Activated naive CD4-positive, alpha-beta T cell treated with anti-CD3 and anti-CD28 coated beads, Interleukin-2, amount 10 ng/mL, durations not matched to agents 7 days and 5 days (primary cell): ENCODE measurements at regions of chr5 and their contacts with region 1.

Region 1: DNA sequence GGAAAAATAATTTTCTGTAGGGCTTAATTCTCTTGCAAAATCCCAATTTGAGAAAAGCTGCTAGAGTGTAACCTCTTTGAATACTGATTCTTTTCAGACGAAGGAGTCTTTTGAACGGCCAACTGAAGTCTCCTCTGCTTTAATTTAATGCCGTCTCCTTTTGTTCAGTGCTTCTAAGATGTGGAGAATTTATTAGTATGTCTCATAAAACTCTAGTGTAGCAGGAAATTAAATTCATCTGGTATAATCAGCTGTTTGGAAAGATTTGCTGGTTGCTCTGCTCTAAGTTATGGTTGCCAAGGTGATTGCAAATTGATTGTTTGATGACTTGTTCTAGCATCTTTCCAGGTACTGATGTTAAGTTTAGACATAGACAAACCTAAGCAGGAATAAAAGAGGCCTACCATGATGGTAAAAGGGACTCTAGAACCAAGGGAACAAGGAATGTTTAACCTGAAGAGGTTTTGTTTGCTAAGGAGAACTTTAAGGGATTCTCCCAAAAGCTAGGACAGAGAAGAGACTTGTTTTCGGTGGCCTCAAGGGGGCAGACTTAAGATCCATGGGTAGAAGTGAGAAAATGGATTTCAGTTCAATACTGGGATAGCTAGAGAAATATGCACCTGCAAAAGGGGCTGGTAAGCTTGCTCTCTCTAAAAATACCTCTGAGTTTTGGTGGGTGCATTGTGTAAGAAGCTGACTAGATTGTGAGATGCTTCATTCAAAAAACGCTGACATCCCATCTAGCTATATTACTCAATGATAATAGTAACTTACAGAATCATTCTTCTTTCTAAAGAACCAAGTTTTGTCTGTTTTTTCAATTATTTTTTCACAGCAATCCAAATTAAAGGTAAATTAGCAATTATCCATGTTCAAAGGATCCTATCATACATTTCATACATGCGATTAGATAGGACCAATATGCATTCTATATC is 5.7 kb upstream of the ADRB2 start:
- DNase-seq: peak; percentile 42
- H3K4me3 Mint-ChIP-seq: no peak overlapping the region
- H3K27ac Mint-ChIP-seq: no peak overlapping the region
- H3K4me1 Mint-ChIP-seq: peaks cover 10% of the 10 kb centered on the region
- H3K27me3 Mint-ChIP-seq: peaks cover 39% of the 10 kb centered on the region

Region 2: GRCh38 chr5:148808864-148809642 is 11.7 kb before region 1 on chr5:
- CTCF ChIA-PET with region 1: interaction called, 22 read pairs
- DNase-seq: peak; percentile 61
- H3K4me3 Mint-ChIP-seq: peak overlapping the region; percentile 81
- H3K27ac Mint-ChIP-seq: peak overlapping the region; percentile 91
- H3K4me1 Mint-ChIP-seq: peaks cover 29% of the 10 kb centered on the region
- H3K27me3 Mint-ChIP-seq: peaks cover 3% of the 10 kb centered on the region

Region 3: GRCh38 chr5:148882332-148882731 is 61.6 kb after region 1 on chr5:
- CTCF ChIA-PET with region 1: no interaction called
- DNase-seq: no peak
- H3K4me3 Mint-ChIP-seq: no peak overlapping the region
- H3K27ac Mint-ChIP-seq: no peak overlapping the region
- H3K4me1 Mint-ChIP-seq: no peaks in the 10 kb centered on the region
- H3K27me3 Mint-ChIP-seq: peaks cover 9% of the 10 kb centered on the region

Region 4: DNA sequence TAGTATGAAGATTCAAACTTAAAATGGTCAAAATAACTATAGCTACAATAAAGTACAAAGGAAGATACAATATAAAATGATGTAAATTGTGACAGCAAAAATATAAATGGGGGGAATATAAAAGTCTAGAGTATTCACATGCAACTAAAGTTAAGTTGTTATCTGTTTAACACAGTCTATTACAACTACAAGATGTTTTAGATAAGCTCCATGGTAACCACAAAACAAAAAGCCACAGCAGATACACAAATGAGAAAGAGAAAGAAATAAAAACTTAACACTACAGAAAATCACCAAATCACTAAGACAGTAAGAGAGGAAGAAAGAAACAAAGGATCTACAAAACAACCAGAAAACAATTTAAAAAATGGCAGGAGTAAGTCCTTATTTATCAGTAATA is 259.2 kb after region 1 on chr5:
- CTCF ChIA-PET with region 1: no interaction called
- DNase-seq: no peak
- H3K4me3 Mint-ChIP-seq: no peak overlapping the region
- H3K27ac Mint-ChIP-seq: no peak overlapping the region
- H3K4me1 Mint-ChIP-seq: no peaks in the 10 kb centered on the region
- H3K27me3 Mint-ChIP-seq: peaks cover 4% of the 10 kb centered on the region